OCI-LY7 (cell line): ENCODE measurements at regions of chr17 and their contacts with region 1.

Region 1: GRCh38 chr17:16987830-16988601 is 16.1 kb upstream of the TNFRSF13B start:
- DNase-seq: peak; percentile 97
- H3K4me3 ChIP-seq: peak overlapping the region; percentile 61
- H3K27ac ChIP-seq: peak overlapping the region; percentile 82
- H3K4me1 ChIP-seq: peaks cover 58% of the 10 kb centered on the region
- CTCF ChIP-seq: no peak

Region 2: GRCh38 chr17:16915752-16916556 is 72.1 kb before region 1 on chr17:
- CTCF ChIA-PET with region 1: interaction called, 4 read pairs
- POLR2A ChIA-PET with region 1: interaction called, 4 read pairs
- intact Hi-C with region 1: loop called (anchors 1 kb)
- DNase-seq: peak; percentile 81
- H3K4me3 ChIP-seq: no peak overlapping the region
- H3K27ac ChIP-seq: no peak overlapping the region
- H3K4me1 ChIP-seq: peaks cover 29% of the 10 kb centered on the region
- CTCF ChIP-seq: peak; percentile 85

Region 3: GRCh38 chr17:16922386-16923104 is 65.5 kb before region 1 on chr17:
- CTCF ChIA-PET with region 1: interaction called, 3 read pairs
- POLR2A ChIA-PET with region 1: no interaction called
- intact Hi-C with region 1: loop called (anchors 1 kb)
- DNase-seq: peak; percentile 62
- H3K4me3 ChIP-seq: no peak overlapping the region
- H3K27ac ChIP-seq: no peak overlapping the region
- H3K4me1 ChIP-seq: peaks cover 5% of the 10 kb centered on the region
- CTCF ChIP-seq: peak; percentile 74

Region 4: DNA sequence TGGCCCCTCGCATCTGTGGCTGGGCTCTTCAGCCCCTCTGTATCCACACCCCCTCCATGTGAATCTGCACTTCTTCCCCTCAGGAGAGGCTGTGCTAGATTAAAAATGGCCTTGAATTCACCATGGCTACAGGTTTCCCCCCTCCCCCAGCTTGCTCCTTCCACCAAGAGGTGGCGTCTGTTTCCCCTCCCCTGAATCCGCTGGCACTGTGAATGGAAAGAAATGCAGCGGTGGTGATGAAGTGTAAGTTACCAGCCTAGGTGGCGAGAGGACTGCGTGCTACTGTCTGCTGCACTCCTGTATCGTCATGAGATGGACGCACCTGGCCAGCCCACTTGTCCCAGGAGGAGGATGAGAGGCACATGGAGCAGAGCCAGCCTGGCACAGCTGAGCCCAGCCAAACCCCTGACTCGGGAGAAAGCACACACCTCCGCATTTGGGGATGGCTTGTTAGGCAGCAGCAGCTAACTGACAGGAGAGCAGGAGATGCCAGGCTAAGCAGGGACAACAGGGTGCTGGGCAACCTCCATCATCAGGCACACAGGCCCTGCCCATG is 42.3 kb before region 1 on chr17:
- CTCF ChIA-PET with region 1: interaction called, 4 read pairs
- POLR2A ChIA-PET with region 1: interaction called, 8 read pairs
- intact Hi-C with region 1: loop called (anchors 1 kb)
- DNase-seq: peak; percentile 23
- H3K4me3 ChIP-seq: no peak overlapping the region
- H3K27ac ChIP-seq: no peak overlapping the region
- H3K4me1 ChIP-seq: peaks cover 57% of the 10 kb centered on the region
- CTCF ChIP-seq: peak; percentile 57

Region 5: DNA sequence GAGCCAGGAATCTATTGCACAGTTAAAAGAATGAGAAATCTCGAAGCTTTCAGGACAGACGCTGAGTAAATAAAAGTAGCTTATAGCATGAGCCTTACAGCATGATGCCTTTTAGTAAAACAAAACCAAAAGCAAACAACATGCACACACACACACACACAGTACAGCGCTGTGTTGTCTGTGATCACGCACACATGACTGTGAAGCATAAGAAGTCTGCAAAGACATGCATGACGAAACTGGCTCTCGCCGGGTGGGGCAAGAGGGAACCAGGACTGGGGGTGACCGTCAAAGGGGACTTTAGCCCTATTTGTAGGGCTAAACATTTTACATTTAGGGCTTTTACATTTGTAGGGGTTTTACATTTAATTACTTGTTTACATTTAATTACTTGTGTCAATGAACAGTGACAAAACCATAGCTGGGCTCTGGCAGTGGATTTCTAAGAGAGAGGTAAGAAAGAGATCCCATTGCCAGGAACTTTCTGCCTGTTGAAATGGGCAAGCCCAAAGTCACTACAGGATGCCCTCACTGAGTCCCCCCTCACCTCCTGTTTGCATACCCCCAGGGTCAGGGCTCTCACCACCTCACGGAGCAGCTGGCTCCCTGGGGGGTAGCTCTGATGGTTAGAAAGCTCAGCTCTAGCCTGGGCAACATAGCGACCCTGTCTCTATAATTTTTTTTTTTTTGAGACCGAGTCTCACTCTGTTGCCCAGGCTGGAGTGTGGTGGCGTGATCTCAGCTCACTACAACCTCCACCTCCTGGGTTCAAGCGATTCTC is 14.1 kb before region 1 on chr17:
- CTCF ChIA-PET with region 1: interaction called, 9 read pairs
- POLR2A ChIA-PET with region 1: interaction called, 65 read pairs
- intact Hi-C with region 1: loop called (anchors 1 kb)
- DNase-seq: peak; percentile 54
- H3K4me3 ChIP-seq: peak overlapping the region; percentile 29
- H3K27ac ChIP-seq: peak overlapping the region; percentile 90
- H3K4me1 ChIP-seq: peaks cover 100% of the 10 kb centered on the region
- CTCF ChIP-seq: no peak